Ovary (tissue), 10 donors: ENCODE measurements at regions of chr20 and their contacts with region 1.

Region 1: DNA sequence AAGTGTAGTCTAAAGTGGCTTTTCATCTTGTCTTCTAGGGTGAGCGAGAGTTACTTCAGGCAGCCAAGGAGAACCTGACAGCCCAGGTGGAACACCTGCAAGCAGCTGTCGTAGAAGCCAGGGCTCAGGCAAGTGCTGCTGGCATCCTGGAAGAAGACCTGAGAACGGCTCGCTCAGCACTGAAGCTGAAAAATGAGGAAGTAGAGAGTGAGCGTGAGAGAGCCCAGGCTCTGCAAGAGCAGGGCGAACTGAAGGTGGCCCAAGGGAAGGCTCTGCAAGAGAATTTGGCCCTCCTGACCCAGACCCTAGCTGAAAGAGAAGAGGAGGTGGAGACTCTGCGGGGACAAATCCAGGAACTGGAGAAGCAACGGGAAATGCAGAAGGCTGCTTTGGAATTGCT is 27.1 kb downstream of the C20orf173 start:
- DNase-seq: no peak
- H3K4me3 ChIP-seq: no peak overlapping the region
- H3K27ac ChIP-seq: no peak overlapping the region
- H3K4me1 ChIP-seq: peaks cover 1% of the 10 kb centered on the region
- H3K27me3 ChIP-seq: no peaks in the 10 kb centered on the region
- CTCF ChIP-seq: no peak
- EP300 ChIP-seq: no peak
- POLR2A ChIP-seq: no peak

Region 2: GRCh38 chr20:35539756-35540212 is 37.4 kb after region 1 on chr20:
- intact Hi-C with region 1: loop called in 1 of 4 experiments (anchors 1 kb)
- DNase-seq: no peak
- H3K4me3 ChIP-seq: no peak overlapping the region
- H3K27ac ChIP-seq: no peak overlapping the region
- H3K4me1 ChIP-seq: peaks cover 4% of the 10 kb centered on the region
- H3K27me3 ChIP-seq: no peaks in the 10 kb centered on the region
- CTCF ChIP-seq: no peak
- EP300 ChIP-seq: no peak
- POLR2A ChIP-seq: no peak

Region 3: GRCh38 chr20:36084897-36085617 is 582.7 kb after region 1 on chr20:
- intact Hi-C with region 1: loop called in 1 of 4 experiments (anchors 5 kb)
- DNase-seq: no peak
- H3K4me3 ChIP-seq: no peak overlapping the region
- H3K27ac ChIP-seq: no peak overlapping the region
- H3K4me1 ChIP-seq: no peaks in the 10 kb centered on the region
- H3K27me3 ChIP-seq: no peaks in the 10 kb centered on the region
- CTCF ChIP-seq: no peak
- EP300 ChIP-seq: no peak
- POLR2A ChIP-seq: no peak